ENCODE measurements at regions of chr10 and their contacts with region 1.

Region 1: DNA sequence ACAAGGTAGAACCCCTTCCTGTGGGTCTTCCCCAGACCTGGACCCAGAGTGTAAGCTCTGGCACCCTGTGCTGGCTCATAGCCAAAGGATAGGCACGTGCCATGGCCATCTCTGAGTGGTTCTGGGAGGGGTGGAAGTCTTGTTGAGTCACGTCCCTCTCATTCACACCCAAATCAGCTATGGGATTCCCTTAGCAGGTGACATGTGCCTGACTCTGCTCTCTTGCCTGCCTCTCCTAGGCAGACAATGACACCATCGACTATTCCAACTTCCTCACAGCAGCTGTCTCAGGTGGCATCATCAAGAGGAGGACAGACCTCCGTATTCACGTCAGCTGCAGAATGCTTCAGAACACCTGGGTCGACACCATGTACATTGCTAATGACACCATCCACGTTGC is 59.8 kb downstream of the C10orf120 start:
- DNase-seq: peak in 1 of 10 donors; percentile 13
- H3K4me3 ChIP-seq: no peak overlapping the region
- H3K27ac ChIP-seq: no peak overlapping the region
- H3K27me3 ChIP-seq: no peaks in the 10 kb centered on the region
- CTCF ChIP-seq: no peak

Region 2: GRCh38 chr10:122577311-122577885 is 62.4 kb before region 1 on chr10:
- intact Hi-C with region 1: loop called in 1 of 2 experiments (anchors 5 kb)
- DNase-seq: no peak
- H3K4me3 ChIP-seq: no peak overlapping the region
- H3K27ac ChIP-seq: no peak overlapping the region
- H3K27me3 ChIP-seq: no peaks in the 10 kb centered on the region
- CTCF ChIP-seq: no peak